ENCODE measurements at regions of chr15 and their contacts with region 1.

Region 1: GRCh38 chr15:101641166-101641764 is 10.9 kb downstream of the TM2D3 start:
- DNase-seq: peak; percentile 86
- ATAC-seq: peak; percentile 73
- H3K4me3 ChIP-seq: peak overlapping the region in 1 of 5 experiments; percentile 32
- H3K4me3 Mint-ChIP-seq: peak overlapping the region; percentile 33
- H3K27ac ChIP-seq: peak overlapping the region; percentile 37 to 53
- H3K27ac Mint-ChIP-seq: peak overlapping the region; percentile 82
- H3K4me1 ChIP-seq: peaks cover 18 to 19% of the 10 kb centered on the region in 2 donors
- H3K4me1 Mint-ChIP-seq: peaks cover 18% of the 10 kb centered on the region
- H3K27me3 ChIP-seq: no peaks in the 10 kb centered on the region
- H3K27me3 Mint-ChIP-seq: no peaks in the 10 kb centered on the region
- CTCF ChIP-seq: peak; percentile 93

Region 2: GRCh38 chr15:101014921-101015841 is 626.1 kb before region 1 on chr15:
- CTCF ChIA-PET with region 1: no interaction called
- POLR2A ChIA-PET with region 1: no interaction called
- intact Hi-C with region 1: loop called (anchors 5 kb)
- DNase-seq: peak; percentile 73
- ATAC-seq: peak; percentile 65
- H3K4me3 ChIP-seq: no peak overlapping the region
- H3K4me3 Mint-ChIP-seq: no peak overlapping the region
- H3K27ac ChIP-seq: no peak overlapping the region
- H3K27ac Mint-ChIP-seq: no peak overlapping the region
- H3K4me1 ChIP-seq: no peaks in the 10 kb centered on the region
- H3K4me1 Mint-ChIP-seq: no peaks in the 10 kb centered on the region
- H3K27me3 ChIP-seq: no peaks in the 10 kb centered on the region
- H3K27me3 Mint-ChIP-seq: no peaks in the 10 kb centered on the region
- CTCF ChIP-seq: peak; percentile 83

Region 3: DNA sequence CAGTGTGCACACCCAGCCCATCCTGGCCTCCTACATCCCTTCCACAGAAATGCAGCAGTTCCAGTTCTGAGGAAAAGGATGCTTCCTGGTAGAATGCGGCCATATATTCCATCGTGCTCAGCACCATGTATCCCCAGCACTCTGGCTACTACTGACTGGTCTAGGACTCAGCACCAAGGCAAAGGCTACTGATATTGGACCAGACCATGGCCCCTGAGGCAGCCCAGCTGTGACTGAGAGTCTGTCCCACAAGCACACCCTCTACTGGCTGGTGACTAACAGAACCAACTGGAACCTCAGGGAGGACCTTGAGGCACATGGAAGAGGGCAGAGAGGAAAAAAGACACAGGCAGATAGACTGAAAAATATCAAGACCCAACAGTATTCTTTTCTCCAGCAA is 53.0 kb after region 1 on chr15:
- CTCF ChIA-PET with region 1: no interaction called
- POLR2A ChIA-PET with region 1: no interaction called
- intact Hi-C with region 1: no loop called
- DNase-seq: no peak
- ATAC-seq: no peak
- H3K4me3 ChIP-seq: no peak overlapping the region
- H3K4me3 Mint-ChIP-seq: no peak overlapping the region
- H3K27ac ChIP-seq: no peak overlapping the region
- H3K27ac Mint-ChIP-seq: no peak overlapping the region
- H3K4me1 ChIP-seq: no peaks in the 10 kb centered on the region
- H3K4me1 Mint-ChIP-seq: peaks cover 14% of the 10 kb centered on the region
- H3K27me3 ChIP-seq: no peaks in the 10 kb centered on the region
- H3K27me3 Mint-ChIP-seq: no peaks in the 10 kb centered on the region
- CTCF ChIP-seq: no peak